MCF 10A (cell line): ENCODE measurements at regions of chr13 and their contacts with region 1.

Region 1: DNA sequence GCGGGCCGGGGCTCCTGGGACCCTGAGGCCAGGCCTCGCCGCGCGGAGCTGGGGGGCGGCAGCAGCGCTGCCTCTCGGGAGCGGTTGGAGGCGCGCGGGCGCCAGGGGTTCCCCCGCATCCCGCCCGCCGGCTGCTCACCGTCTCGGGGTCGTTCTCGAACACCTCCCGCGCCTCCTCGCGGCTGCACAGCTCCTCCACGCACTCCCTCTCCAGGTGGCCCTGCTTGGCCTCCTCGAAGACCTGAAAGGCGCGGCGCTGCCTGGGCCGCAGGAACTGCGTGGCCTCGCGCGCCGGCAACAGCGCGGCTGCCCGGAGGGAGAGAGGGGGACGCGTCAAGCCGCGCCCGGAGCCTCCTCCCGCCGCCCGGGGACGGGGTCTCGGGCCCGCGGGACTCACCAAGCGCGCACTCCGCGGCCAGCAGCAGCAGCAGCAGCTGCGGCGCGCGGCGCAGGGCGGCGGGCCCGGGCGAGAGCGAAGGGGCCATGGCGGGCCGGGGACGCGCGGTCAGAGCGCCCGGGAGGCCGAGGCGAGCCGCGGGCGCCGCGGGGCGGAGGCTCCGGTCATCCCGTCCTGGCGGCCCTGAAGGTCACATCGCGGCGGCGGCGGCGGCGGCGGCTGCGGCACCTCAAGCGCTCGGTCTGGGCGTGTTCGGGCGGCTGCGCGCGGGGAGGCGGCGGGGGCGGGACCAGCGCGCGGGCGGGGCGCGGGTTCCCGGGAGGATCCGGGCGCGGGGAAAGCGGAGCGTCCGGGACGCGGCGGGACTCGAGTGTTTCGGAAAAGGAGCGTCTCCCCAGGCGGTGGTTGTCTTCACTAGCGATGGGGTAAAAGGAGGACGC is at the start of gene GAS6:
- DNase-seq: peak; percentile 41
- H3K4me3 Mint-ChIP-seq: peak within 1 kb of the TSS; percentile 68
- H3K27ac Mint-ChIP-seq: peak within 1 kb of the TSS; percentile 61
- H3K4me1 Mint-ChIP-seq: peaks cover 31% of the 10 kb centered on the region
- H3K27me3 Mint-ChIP-seq: no peaks in the 10 kb centered on the region
- CTCF ChIP-seq: peak; percentile 21
- total RNA-seq, gene GAS6: 58.9 and 92.3 TPM in 2 replicates

Region 2: GRCh38 chr13:113837554-113838355 is 25.9 kb before region 1 on chr13:
- CTCF ChIA-PET with region 1: interaction called, 3 read pairs
- POLR2A ChIA-PET with region 1: interaction called, 49 read pairs
- intact Hi-C with region 1: loop called (anchors 1 kb)
- DNase-seq: peak; percentile 99
- H3K4me3 Mint-ChIP-seq: peak overlapping the region; percentile 75
- H3K27ac Mint-ChIP-seq: peak overlapping the region; percentile 100
- H3K4me1 Mint-ChIP-seq: peaks cover 21% of the 10 kb centered on the region
- H3K27me3 Mint-ChIP-seq: no peaks in the 10 kb centered on the region
- CTCF ChIP-seq: no peak

Region 3: DNA sequence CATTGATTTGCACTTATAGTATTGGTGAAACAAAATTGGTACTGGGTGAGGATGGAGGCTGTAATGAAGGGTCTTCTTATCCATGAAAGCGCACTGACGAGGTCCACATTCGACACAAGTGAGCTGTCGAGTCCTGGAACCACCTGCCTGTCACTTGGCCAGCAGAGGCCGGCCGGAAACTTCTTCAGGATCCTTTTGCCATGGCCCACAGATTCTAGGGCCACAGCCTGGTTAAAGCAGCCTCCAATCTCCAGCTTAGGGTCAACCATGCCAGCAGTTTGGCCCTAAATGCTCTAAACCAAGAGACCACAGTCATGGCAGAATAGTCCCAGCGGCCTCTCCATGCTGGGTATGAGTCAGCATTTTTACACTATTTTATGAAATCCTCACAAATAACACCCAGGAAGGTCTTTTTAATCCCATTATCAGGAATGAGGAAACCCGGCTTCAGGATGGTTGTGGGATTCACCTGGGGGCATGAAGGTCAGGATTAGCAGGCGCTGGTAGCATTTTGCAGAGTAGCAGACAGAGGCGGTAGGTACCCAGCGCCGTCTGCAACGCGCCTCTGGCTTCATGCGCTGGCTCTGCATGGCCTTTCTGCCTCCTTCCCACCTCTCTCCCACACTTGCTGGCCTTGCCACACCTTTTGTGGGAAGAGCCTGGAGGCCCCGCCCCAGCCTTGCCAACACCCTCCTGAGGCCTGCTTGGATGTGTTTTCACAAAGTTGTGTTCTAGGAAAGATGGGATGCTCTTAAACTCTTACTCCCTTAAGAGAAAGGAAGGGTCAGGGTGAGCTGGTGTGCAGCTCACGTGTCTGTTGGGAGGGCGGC is 15.0 kb before region 1 on chr13:
- CTCF ChIA-PET with region 1: interaction called, 4 read pairs
- POLR2A ChIA-PET with region 1: interaction called, 19 read pairs
- intact Hi-C with region 1: loop called (anchors 2 kb)
- DNase-seq: peak; percentile 86
- H3K4me3 Mint-ChIP-seq: no peak overlapping the region
- H3K27ac Mint-ChIP-seq: no peak overlapping the region
- H3K4me1 Mint-ChIP-seq: peaks cover 20% of the 10 kb centered on the region
- H3K27me3 Mint-ChIP-seq: no peaks in the 10 kb centered on the region
- CTCF ChIP-seq: no peak

Region 4: GRCh38 chr13:113897161-113897560 is 33.5 kb after region 1 on chr13:
- CTCF ChIA-PET with region 1: no interaction called
- POLR2A ChIA-PET with region 1: interaction called, 6 read pairs
- intact Hi-C with region 1: loop called (anchors 2 kb)
- DNase-seq: peak; percentile 79
- H3K4me3 Mint-ChIP-seq: peak overlapping the region; percentile 9
- H3K27ac Mint-ChIP-seq: peak overlapping the region; percentile 58
- H3K4me1 Mint-ChIP-seq: peaks cover 20% of the 10 kb centered on the region
- H3K27me3 Mint-ChIP-seq: no peaks in the 10 kb centered on the region
- CTCF ChIP-seq: no peak

Region 5: DNA sequence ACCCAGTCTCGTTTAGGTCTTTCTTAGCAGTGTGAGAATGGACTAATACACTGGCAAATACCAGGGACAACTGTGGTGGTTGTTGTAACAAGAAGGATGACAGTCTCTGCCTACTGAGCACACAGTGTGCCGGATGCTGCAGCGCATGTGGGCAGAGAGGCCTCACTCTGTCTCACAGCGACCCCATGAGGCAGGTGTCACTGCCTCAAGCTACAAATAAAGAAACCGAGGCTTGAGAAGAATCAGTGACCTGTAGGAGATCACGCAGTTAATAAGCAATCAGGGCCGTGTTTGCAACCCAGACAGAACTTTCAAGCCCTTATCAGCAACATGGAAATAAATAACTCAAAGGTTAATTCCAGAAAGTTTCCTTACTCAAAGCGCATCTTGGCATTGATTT is 40.8 kb after region 1 on chr13:
- CTCF ChIA-PET with region 1: no interaction called
- POLR2A ChIA-PET with region 1: no interaction called
- intact Hi-C with region 1: loop called (anchors 2 kb)
- DNase-seq: peak; percentile 75
- H3K4me3 Mint-ChIP-seq: no peak overlapping the region
- H3K27ac Mint-ChIP-seq: no peak overlapping the region
- H3K4me1 Mint-ChIP-seq: peaks cover 12% of the 10 kb centered on the region
- H3K27me3 Mint-ChIP-seq: no peaks in the 10 kb centered on the region
- CTCF ChIP-seq: peak; percentile 83

Region 6: DNA sequence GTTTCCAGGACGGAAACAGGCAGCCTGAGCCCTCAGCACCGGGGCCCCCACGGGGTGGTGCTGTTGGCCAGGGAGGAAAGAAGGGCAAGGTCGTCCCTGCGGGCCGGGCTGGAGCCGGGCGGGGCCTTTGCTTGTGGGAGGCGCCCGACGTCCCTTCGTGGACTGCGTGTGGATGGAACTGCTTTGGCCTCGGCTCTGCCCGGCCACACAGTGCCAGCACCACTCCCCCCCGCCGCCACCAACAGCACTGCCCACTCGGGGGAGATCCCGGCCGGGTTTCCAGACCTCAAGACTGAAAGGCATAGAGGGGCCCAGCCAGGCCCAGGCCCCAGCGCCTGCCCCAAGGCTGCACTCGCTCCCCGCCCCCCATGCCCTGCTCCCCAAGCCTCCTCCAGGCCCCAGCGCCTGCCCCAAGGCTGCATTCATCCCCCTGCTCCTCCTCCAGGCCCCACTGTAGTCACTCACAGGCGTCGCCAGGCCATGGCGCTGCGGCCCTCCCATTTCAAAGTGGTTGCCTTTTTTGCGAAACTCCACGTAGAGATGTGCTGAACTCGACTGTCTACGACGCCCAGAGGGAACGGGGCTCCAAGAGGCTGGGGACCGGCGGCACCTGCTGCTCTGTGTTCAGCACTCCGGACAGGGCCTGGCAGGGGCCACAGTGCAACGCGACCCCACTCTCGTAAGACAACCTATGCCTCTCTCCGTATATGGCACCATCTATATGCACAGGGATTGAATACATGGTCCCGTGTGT is 87.8 kb after region 1 on chr13:
- CTCF ChIA-PET with region 1: interaction called, 4 read pairs
- POLR2A ChIA-PET with region 1: no interaction called
- intact Hi-C with region 1: loop called (anchors 2 kb)
- DNase-seq: peak; percentile 83
- H3K4me3 Mint-ChIP-seq: no peak overlapping the region
- H3K27ac Mint-ChIP-seq: no peak overlapping the region
- H3K4me1 Mint-ChIP-seq: peaks cover 4% of the 10 kb centered on the region
- H3K27me3 Mint-ChIP-seq: no peaks in the 10 kb centered on the region
- CTCF ChIP-seq: peak; percentile 96